Tibial artery (tissue), 4 donors: ENCODE measurements at regions of chr2 and their contacts with region 1.

Region 1: DNA sequence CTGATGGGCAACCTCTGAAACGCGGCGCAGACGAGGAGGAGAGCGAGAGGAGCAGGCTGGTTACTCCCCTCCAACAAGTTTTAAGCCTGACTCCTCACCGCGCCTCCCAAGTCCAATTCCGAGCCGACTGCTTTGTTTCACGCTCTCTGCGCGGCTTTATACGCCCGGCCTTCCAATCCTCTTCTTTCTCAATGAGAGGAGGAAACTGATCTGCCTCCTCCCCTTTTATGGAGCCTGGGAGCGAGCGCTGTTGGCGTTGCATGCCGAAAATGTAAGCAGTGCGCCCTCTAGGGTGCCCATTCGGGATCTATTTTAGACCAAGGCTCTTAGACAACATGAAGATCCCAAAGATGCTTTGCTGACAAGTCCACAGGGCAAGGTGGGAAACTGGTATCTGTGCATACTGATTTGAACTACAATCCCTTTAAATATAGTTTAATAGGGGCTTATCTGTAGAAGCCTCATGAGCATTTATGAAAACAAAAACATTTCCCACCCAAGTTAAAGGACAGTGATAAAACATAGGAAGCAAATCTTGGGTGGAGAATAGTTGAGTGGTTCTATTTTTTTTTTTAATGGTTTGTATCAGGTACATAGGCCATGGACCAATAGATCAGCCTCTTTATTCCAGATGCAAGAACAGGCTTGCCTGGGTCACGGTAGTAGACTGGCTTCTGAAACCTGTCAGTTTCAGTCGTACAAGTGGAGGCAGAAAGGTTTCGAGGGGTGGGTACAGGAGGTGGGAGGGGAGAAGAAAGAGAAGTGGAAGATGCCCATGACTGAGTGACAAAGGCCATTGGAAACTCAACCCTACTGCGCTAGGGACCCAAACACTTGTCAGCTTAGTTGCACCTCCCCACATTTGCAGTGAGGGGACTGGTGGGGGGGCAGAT is at the start of gene RND3:
- DNase-seq: peak; percentile 99
- H3K4me3 ChIP-seq: peak within 1 kb of the TSS; percentile 70 to 82
- H3K27ac ChIP-seq: peak within 1 kb of the TSS; percentile 99 to 100
- H3K4me1 ChIP-seq: peaks cover 0 to 26% (median 18%) of the 10 kb centered on the region in 4 donors
- H3K27me3 ChIP-seq: no peaks in the 10 kb centered on the region
- CTCF ChIP-seq: peak; percentile 85 to 94

Region 2: DNA sequence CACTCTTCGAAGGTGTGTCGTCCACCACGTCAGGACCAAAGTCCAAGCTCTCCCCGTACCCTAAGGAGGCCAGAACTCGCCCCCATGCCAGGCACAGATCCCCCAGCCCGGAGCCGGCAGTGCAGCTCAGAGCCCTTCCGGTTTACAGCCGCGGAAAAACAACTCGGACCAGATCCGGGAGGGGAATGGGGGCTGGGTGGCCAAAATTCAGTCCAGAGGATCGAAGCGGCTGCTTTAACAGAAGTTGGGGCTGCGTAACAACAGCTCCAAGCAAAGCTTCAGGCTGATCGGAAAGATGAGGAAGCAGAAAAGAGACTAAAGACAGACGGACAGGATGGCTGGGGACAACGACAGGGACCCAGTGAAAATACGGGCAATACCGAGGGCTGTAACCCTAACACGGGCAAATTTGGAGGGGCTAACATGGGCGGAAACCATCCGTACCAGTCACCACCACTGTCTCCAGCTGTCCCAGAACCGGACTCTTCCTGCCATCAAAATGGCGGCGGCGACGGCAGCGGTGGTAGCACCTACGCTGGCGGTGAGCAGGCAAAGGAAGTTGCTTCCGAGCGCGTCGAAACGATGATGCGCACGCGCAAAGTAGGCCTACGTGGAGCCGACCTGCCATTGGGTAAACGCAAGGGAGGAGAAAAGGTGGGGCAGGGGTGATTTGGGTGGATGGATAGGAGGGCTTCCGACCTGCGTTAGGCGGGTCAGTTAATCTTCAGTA is 900.4 kb before region 1 on chr2 and contains the start of gene MMADHC:
- intact Hi-C with region 1: loop called (anchors 5 kb)
- DNase-seq: peak; percentile 93 to 97
- H3K4me3 ChIP-seq: peak within 1 kb of the TSS; percentile 64 to 84
- H3K27ac ChIP-seq: peak within 1 kb of the TSS; percentile 93 to 98
- H3K4me1 ChIP-seq: peaks cover 0 to 47% (median 31%) of the 10 kb centered on the region in 4 donors
- H3K27me3 ChIP-seq: no peaks in the 10 kb centered on the region
- CTCF ChIP-seq: no peak

Region 3: GRCh38 chr2:150167711-150168110 is 320.1 kb before region 1 on chr2:
- intact Hi-C with region 1: loop called (anchors 5 kb)
- DNase-seq: no peak
- H3K4me3 ChIP-seq: no peak overlapping the region
- H3K27ac ChIP-seq: peak overlapping the region; percentile 56 to 69
- H3K4me1 ChIP-seq: peaks cover 0 to 50% (median 37%) of the 10 kb centered on the region in 4 donors
- H3K27me3 ChIP-seq: no peaks in the 10 kb centered on the region
- CTCF ChIP-seq: no peak

Region 4: DNA sequence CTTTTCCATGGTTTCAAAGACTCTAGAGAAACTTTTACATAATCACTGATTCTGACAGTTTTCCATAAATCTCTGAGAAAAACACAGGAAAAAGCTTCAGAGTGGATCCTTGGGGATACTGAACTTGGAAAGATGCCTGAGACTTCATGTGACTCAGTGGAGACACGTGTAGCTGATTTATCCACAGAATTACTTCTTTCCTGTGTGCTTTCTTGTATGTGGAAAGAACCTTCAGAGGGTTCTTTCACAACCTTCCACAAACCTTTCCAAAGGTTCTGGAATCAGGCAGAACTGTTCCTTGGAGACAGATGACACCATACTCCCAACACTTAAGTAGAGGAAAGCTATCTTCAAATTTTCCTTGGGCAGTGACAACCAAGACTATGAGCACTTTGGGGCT is 207.6 kb before region 1 on chr2:
- intact Hi-C with region 1: loop called (anchors 5 kb)
- DNase-seq: peak in 1 of 2 donors; percentile 62
- H3K4me3 ChIP-seq: no peak overlapping the region
- H3K27ac ChIP-seq: peak overlapping the region in 1 of 2 donors; percentile 47
- H3K4me1 ChIP-seq: peaks cover 0 to 40% (median 13%) of the 10 kb centered on the region in 4 donors
- H3K27me3 ChIP-seq: no peaks in the 10 kb centered on the region
- CTCF ChIP-seq: no peak

Region 5: GRCh38 chr2:150610671-150611279 is 123.0 kb after region 1 on chr2:
- intact Hi-C with region 1: loop called (anchors 10 kb)
- DNase-seq: no peak
- H3K4me3 ChIP-seq: no peak overlapping the region
- H3K27ac ChIP-seq: no peak overlapping the region
- H3K4me1 ChIP-seq: peaks cover 0 to 4% (median 2%) of the 10 kb centered on the region in 4 donors
- H3K27me3 ChIP-seq: no peaks in the 10 kb centered on the region
- CTCF ChIP-seq: peak; percentile 46 to 54

Region 6: GRCh38 chr2:151238527-151239487 is 751.0 kb after region 1 on chr2:
- intact Hi-C with region 1: loop called (anchors 2 kb)
- DNase-seq: peak in 1 of 2 donors; percentile 72
- H3K4me3 ChIP-seq: no peak overlapping the region
- H3K27ac ChIP-seq: no peak overlapping the region
- H3K4me1 ChIP-seq: peaks cover 0 to 3% (median 0%) of the 10 kb centered on the region in 4 donors
- H3K27me3 ChIP-seq: no peaks in the 10 kb centered on the region
- CTCF ChIP-seq: peak; percentile 91 to 92